ENCODE measurements at regions of chr2 and their contacts with region 1.

Region 1: DNA sequence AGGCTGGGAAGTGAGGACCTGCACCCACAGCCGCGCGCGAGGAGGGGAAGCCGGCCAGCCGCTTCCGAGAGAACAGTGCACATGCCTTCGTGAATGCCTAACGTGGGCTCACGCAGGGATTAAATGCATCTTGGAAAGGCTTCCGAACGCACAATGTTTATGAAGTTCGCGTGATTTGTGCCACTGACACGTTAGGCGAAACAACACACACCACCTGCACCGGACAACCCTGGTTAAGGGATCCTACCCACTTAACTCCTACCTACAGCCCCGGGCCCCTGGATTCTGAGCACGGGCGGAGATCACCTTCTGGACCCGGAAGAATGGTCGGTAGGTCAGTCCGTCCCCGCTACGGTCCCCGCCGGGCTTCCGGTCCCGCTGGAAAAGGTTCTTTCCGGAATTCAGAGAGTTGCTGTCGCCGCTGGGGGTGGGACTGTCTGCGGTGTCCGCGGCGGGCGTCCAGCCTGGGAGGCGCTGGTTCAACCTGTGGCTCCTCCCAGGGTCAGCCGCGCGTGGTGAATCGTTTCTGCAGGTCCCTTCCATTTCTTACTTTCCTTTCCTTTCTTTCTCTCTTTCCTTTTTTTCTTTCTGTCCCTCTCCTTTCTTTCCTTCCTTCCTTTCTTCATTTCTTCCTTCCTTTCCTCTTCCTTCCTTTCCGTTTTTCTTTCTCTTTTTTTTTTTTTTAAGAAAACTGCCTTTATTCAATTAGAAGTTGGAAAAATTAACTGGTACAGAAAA is at the start of gene MTIF2:
- DNase-seq: peak; percentile 92
- H3K4me3 ChIP-seq: peak within 1 kb of the TSS; percentile 60 to 98 (median 61)
- H3K27ac ChIP-seq: peak within 1 kb of the TSS; percentile 78
- H3K4me1 ChIP-seq: peaks cover 5% of the 10 kb centered on the region
- H3K27me3 ChIP-seq: no peaks in the 10 kb centered on the region
- CTCF ChIP-seq: peak in 1 of 2 donors; percentile 18
- total RNA-seq, gene MTIF2: 24.0 to 39.5 TPM

Region 2: DNA sequence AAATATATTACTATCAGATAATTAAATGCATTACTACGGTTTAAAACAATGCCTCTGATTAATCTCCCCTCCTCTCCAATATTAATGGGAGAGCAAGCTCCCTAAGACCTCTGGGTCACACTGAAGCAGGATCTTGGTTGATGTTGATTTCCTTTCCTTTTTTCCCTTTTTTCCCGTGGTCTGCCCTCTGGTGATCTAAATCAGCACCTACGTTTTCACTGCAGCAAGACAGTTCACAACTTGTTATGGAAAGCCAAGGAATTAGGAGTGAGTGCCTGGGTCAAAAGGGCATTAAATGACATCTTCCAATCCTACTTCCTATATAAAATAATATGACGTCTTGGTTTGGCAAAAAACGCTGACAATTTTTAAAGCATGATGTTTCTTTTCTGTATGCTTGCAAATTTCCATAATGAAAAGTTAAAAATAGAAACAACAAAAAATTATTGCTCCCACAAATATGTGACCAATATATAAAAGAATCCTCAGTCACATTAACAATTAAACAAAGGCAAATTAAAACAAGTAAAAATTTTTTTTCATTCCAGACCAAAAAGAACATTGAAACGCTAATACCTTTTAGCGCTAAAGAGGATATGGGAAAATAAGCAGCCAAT is 242.5 kb after region 1 on chr2:
- CTCF ChIA-PET with region 1: no interaction called
- dilution Hi-C with region 1: no loop called
- in situ Hi-C with region 1: no loop called
- intact Hi-C with region 1: loop called (anchors 2 kb)
- DNase-seq: peak; percentile 46
- H3K4me3 ChIP-seq: no peak overlapping the region
- H3K27ac ChIP-seq: no peak overlapping the region
- H3K4me1 ChIP-seq: no peaks in the 10 kb centered on the region
- H3K27me3 ChIP-seq: no peaks in the 10 kb centered on the region
- CTCF ChIP-seq: peak; percentile 47 to 58